Aorta (tissue), 5 donors: ENCODE measurements at regions of chr2 and their contacts with region 1.

Region 1: DNA sequence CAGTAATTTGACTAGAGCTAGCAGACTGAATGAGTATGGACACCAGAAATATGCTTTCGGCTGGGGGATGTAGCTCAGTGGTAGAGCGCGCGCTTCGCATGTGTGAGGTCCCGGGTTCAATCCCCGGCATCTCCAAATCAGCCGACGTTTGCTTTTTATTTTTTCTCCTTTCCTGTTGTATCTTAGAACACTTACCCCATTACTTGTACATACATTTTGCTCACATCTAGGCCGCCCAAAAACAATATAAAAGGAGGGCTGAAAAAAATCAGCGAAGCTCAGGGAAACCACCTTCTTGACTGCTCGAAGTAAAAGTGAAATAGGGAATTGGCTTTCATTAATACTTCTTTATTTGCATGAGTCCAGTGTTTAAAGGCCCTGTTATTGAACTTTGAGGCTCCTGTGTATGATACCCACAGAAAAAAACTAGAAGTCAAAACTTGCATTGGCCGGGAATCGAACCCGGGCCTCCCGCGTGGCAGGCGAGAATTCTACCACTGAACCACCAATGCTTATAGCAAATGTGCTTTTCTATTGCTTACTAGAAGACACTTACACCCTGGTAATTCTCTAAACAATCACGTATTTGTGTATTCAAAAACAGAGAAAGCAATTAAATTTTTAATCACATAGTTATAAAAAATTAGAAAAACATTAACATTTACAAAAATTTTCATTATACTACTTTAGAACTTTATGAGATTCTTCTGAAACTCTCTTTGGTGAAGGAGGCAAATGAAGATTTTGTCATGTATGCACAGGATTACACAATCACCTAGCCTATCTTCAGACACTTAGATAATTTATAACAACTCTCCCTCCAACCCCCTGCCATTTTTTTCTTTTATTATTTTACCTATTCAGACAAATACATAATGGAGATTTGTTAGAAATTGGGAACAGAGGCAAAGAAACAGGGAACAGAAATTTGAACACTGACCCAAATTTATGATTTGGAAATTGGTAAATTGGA is 35.2 kb upstream of the GPD2 start:
- DNase-seq: peak; percentile 64 to 87
- ATAC-seq: peak; percentile 96
- H3K4me3 ChIP-seq: peak overlapping the region; percentile 62 to 99
- H3K27ac ChIP-seq: peak overlapping the region in 1 of 2 donors; percentile 41
- H3K4me1 ChIP-seq: no peaks in the 10 kb centered on the region
- H3K27me3 ChIP-seq: no peaks in the 10 kb centered on the region

Region 2: DNA sequence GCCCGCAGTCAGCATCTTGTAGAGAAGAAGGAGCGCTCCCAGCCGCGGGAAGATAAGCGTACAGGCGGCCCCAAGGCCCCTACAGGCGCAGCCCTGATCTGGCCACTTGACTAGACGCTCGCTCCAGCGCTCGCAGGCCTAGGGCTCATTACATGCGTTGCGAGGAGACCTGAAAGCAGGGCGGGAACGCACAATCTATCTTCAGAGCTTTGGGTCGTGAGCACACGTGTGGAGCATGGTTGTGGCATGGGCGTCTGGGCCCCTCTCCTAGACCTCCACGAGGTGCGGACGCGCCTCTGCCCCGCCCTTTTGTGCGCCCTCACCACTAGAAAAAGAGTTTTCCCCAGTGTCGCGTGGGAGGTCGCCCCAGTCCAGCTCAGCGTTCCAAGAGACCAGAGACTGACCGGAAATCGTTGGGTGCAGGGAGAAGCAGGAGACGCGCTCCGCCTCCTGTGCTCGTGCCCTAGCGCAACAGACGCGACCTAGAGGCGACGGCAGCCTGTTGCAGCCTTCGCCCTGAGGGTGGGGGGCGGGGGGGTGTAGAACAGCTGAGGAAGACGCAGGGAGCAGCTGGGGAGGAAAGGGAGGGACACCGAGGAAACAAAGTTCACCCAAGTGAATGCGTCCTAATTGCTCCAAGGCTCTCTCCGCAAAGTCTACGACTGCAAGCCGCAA is 81.0 kb before region 1 on chr2:
- intact Hi-C with region 1: loop called in 1 of 2 experiments (anchors 5 kb)
- DNase-seq: peak; percentile 74 to 85
- ATAC-seq: peak; percentile 82
- H3K4me3 ChIP-seq: peak overlapping the region; percentile 14 to 50
- H3K27ac ChIP-seq: peak overlapping the region in 1 of 2 donors; percentile 11
- H3K4me1 ChIP-seq: no peaks in the 10 kb centered on the region
- H3K27me3 ChIP-seq: no peaks in the 10 kb centered on the region

Region 3: GRCh38 chr2:156341452-156342253 is 59.3 kb before region 1 on chr2:
- intact Hi-C with region 1: loop called (anchors 1 to 5 kb)
- DNase-seq: peak; percentile 95 to 97
- ATAC-seq: peak; percentile 94
- H3K4me3 ChIP-seq: peak overlapping the region; percentile 75 to 99
- H3K27ac ChIP-seq: peak overlapping the region; percentile 97 to 100
- H3K4me1 ChIP-seq: no peaks in the 10 kb centered on the region
- H3K27me3 ChIP-seq: no peaks in the 10 kb centered on the region

Region 4: DNA sequence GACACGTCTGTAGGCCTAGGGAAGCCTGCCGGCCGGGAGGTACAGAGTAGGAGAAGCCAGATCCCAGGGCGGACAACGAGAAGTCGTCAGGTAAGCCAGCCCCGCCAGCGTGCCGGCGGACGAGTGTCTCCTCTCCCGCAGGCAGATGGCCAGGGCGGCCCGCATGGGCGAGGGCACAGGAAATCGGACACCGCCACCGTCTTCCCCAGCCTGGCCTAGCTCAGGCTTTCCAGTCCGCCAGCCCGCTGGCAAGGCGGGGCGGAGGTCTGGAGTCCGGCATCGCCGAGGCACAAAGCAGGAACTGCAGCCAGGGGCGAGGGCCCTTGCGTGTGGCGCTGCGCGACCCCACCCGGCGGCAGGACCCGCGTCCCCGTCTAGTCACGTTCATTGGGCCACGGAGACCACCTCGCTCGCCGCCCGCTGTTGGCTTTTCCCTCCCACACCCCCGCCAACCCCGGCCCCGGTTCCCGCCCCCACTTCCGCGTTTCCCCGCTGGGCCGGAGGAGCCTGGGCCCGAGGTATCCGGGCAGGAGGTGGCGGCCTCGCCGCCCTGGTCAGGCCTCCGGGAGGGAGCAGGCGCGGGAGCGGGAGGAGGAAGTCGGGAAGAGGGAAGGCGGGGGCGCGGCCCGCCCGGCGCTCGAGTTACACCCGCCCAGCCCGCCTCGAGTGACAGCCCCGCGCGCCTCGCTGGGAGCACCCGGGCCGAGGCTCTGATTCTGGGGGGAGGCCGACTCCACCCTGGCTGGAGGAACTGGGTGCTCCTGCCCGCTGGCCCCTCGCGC is 34.9 kb after region 1 on chr2 and contains the start of gene GPD2:
- intact Hi-C with region 1: loop called (anchors 1 to 2 kb)
- DNase-seq: peak; percentile 96 to 98
- ATAC-seq: peak; percentile 98
- H3K4me3 ChIP-seq: peak within 1 kb of the TSS; percentile 71 to 78
- H3K27ac ChIP-seq: peak within 1 kb of the TSS; percentile 87 to 98
- H3K4me1 ChIP-seq: peaks cover 0 to 4% of the 10 kb centered on the region in 2 donors
- H3K27me3 ChIP-seq: no peaks in the 10 kb centered on the region
- total RNA-seq, gene GPD2: 16.3 to 31.3 TPM

Region 5: GRCh38 chr2:156852681-156853080 is 451.7 kb after region 1 on chr2:
- intact Hi-C with region 1: no loop called
- DNase-seq: no peak
- ATAC-seq: no peak
- H3K4me3 ChIP-seq: no peak overlapping the region
- H3K27ac ChIP-seq: no peak overlapping the region
- H3K4me1 ChIP-seq: no peaks in the 10 kb centered on the region
- H3K27me3 ChIP-seq: no peaks in the 10 kb centered on the region